ENCODE measurements at regions of chr9 and their contacts with region 1.

Region 1: DNA sequence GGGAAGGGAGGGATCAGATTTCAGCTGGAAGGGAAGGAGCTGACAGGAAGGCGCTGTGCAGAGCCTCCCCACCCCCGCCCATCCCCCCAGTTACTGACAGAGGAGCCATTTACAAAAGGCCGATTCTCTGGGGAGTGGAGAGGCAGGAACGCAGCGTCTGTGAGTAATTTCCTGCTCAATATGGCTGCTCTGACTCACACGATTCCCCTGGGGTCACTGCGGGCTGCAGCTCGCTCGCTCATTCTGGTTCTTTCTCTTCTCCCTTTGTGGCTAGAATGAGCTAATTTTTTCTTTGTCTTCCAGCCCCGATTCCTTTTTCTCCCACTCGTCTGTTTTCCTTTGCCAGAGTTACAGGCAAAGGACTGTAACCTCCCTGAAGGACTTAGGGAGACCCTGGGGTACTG is 28.8 kb downstream of the PTPA start:
- DNase-seq: peak; percentile 92 to 98 (median 96)
- ATAC-seq: peak; percentile 76 to 81 (median 78)
- H3K4me3 ChIP-seq: peak overlapping the region in 11 of 12 donors; percentile 29 to 69 (median 57)
- H3K27ac ChIP-seq: peak overlapping the region; percentile 99 to 100 (median 100)
- H3K4me1 ChIP-seq: peaks cover 25 to 77% (median 71%) of the 10 kb centered on the region in 12 donors
- H3K27me3 ChIP-seq: no peaks in the 10 kb centered on the region
- CTCF ChIP-seq: no peak
- POLR2A ChIP-seq: peak in 1 of 2 donors; percentile 50

Region 2: GRCh38 chr9:129177791-129178559 is 38.0 kb after region 1 on chr9 and contains the start of gene IER5L:
- intact Hi-C with region 1: loop called in 9 of 10 experiments (anchors 1 to 5 kb)
- DNase-seq: peak; percentile 94 to 98 (median 97)
- ATAC-seq: peak; percentile 85 to 90 (median 89)
- H3K4me3 ChIP-seq: peak within 1 kb of the TSS; percentile 77 to 99 (median 95)
- H3K27ac ChIP-seq: peak within 1 kb of the TSS; percentile 81 to 100 (median 99)
- H3K4me1 ChIP-seq: peaks cover 3 to 43% (median 25%) of the 10 kb centered on the region in 12 donors
- H3K27me3 ChIP-seq: no peaks in the 10 kb centered on the region
- CTCF ChIP-seq: no peak
- POLR2A ChIP-seq: peak; percentile 90 to 99
- total RNA-seq, gene IER5L: 4.1 to 18.4 (median 5.5) TPM

Region 3: DNA sequence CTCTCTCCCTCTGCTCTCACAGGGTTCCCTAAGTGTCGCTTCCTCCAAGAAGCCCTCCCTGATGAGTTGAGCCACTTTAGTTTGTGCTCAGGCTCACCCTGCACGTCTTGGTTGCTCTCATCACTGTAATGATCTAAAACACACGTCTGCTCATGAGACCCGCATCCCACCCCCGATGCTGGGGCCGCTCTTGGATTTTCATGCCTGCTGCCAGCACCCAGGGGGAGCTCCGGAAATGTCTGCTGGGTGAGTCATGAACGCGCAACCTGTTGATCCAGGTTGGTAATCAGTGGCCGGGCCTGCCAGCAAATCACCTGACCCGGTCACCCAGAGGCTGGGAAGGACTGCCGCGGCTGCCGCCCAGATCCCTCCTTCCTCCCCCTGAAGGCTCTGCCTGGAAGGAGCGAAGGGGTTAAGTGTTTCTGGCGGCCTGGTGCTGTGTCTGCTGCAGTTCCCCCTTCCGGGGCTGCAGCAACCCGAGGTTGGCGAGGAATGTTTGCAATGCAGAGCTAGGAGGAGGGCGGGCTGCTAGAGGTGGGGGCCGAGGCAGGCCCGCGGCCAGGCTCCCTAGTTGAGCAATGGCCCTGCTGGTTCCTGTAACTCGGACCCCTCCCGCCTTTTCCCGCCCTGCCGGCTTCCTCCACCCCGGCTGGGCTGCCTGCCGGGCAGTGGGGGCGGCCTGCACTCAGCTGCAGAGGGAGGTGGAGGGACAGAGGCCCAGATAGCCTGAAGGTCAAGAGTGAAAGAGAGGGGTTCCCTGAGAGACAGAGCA is 194.1 kb after region 1 on chr9:
- intact Hi-C with region 1: loop called in 1 of 10 experiments (anchors 2 kb)
- DNase-seq: peak; percentile 92 to 95 (median 94)
- ATAC-seq: peak; percentile 85 to 94 (median 89)
- H3K4me3 ChIP-seq: peak overlapping the region in 9 of 12 donors; percentile 16 to 40 (median 25)
- H3K27ac ChIP-seq: peak overlapping the region; percentile 39 to 97 (median 88)
- H3K4me1 ChIP-seq: peaks cover 12 to 65% (median 43%) of the 10 kb centered on the region in 12 donors
- H3K27me3 ChIP-seq: no peaks in the 10 kb centered on the region
- CTCF ChIP-seq: no peak
- POLR2A ChIP-seq: peak in 1 of 2 donors; percentile 46

Region 4: DNA sequence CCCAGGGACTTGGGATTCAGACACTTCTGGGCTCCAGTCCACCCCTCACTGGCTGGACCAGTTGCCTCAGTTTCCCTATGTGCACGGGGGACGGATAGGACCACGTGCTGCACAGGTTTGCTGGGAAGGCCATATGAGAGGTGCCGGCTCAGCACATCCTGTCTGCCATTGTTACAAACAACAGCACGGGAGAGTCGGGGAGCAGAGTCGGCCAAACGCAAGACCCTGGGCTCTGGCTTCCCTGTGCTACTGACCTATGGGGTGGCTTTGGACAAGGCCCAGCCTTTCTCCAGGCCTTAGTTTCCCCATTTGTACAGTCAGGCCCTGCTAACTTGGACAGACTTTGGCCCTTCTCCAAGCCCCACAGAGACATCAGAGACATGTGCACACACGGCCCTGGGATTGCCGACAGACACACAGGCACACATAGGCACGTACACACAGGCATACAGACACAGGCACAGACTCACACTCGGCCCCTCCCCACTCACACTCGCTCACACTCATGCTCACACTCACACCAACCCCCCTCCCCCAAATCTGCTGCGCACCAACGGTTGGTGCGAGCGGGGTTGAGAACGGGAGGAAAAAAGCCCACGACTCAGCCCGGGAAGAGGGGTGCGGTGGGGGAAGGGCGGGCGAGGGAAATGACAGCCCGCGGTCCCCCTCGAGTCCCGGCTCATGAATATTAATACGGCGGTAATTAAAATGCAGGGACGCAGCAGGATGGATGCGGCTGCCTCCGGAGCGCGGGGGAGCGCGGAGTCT is 347.8 kb after region 1 on chr9:
- intact Hi-C with region 1: loop called in 7 of 10 experiments (anchors 2 to 5 kb)
- DNase-seq: peak; percentile 56 to 79 (median 72)
- ATAC-seq: peak in 2 of 4 donors; percentile 2 to 3
- H3K4me3 ChIP-seq: peak overlapping the region; percentile 21 to 68 (median 60)
- H3K27ac ChIP-seq: peak overlapping the region; percentile 93 to 100 (median 99)
- H3K4me1 ChIP-seq: peaks cover 23 to 93% (median 73%) of the 10 kb centered on the region in 12 donors
- H3K27me3 ChIP-seq: no peaks in the 10 kb centered on the region
- CTCF ChIP-seq: no peak
- POLR2A ChIP-seq: no peak

Region 5: GRCh38 chr9:129610473-129611301 is 470.7 kb after region 1 on chr9:
- intact Hi-C with region 1: loop called (anchors 1 to 2 kb)
- DNase-seq: peak; percentile 82 to 92 (median 84)
- ATAC-seq: peak in 3 of 4 donors; percentile 12 to 66 (median 54)
- H3K4me3 ChIP-seq: peak overlapping the region; percentile 44 to 74 (median 66)
- H3K27ac ChIP-seq: peak overlapping the region; percentile 29 to 98 (median 90)
- H3K4me1 ChIP-seq: peaks cover 0 to 47% (median 39%) of the 10 kb centered on the region in 12 donors
- H3K27me3 ChIP-seq: no peaks in the 10 kb centered on the region
- CTCF ChIP-seq: peak; percentile 66 to 98 (median 91)
- POLR2A ChIP-seq: peak in 1 of 2 donors; percentile 41

Region 6: DNA sequence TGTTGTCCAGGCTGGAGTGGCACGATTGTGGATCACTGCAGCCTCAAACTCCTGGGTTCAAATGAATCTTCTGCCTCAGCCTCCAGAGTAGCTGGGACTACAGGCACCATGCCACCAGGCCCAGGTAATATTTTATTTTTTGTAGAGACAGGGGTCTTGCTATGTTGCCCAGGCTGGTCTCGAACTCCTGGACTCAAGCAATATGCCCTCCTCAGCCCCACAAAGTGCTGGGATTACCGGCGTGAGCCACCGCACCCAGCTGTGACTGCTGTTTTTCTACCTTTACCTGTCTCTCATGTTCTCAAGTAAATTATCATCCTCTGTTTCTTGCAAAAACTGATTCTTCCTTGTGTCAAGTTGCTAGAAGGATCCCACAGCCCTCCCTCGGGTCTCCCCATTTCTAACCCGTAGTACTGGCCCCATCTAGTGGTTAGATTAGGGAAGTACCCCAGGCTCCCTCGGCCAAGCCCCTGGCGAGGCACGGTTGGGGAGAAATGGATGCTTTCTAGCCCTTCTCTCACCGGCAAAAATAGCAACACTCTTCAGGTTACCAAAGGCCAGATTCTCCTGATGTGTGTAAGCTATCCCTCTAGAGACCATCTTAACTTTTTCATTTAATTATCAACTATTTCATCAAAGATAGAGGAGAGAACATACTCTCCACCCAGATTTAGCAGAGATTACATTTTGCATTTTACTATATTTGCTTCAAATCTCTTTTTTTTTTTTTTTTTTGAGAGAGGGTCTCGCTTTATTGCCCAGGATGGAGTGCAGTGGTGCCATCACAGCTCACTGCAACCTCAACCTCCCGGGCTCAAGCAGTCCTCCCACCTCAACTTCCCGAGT is 643.7 kb after region 1 on chr9:
- intact Hi-C with region 1: loop called in 5 of 10 experiments (anchors 2 to 5 kb)
- DNase-seq: peak; percentile 54 to 73 (median 70)
- ATAC-seq: peak; percentile 46 to 95 (median 93)
- H3K4me3 ChIP-seq: no peak overlapping the region
- H3K27ac ChIP-seq: no peak overlapping the region
- H3K4me1 ChIP-seq: peaks cover 0 to 5% (median 0%) of the 10 kb centered on the region in 12 donors
- H3K27me3 ChIP-seq: peaks cover 0 to 10% (median 0%) of the 10 kb centered on the region in 9 donors
- CTCF ChIP-seq: peak; percentile 77 to 97 (median 91)
- POLR2A ChIP-seq: no peak